Breast epithelium (tissue), 4 donors: ENCODE measurements at regions of chr5 and their contacts with region 1.

Region 1: DNA sequence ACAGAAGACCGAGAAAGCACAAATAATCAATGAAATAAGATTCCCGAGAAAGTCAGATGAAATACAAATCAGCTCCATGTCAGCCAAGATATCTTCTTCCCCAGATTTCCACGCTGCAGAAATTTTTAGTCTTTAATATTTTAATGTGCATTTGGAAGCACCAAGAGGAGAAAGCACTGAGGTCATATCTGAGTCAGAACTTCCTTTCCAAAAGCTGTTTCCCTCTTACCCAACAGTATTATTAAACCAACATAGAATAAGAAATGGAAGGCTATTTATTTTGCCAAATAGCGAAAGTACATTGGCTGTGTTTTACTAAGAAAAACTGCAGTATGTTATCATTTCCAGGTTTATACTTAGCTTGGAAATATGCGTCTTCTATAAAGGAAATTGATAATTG is 772.1 kb upstream of the CDH9 start:
- DNase-seq: no peak
- H3K4me3 ChIP-seq: no peak overlapping the region
- H3K27ac ChIP-seq: no peak overlapping the region
- H3K4me1 ChIP-seq: no peaks in the 10 kb centered on the region
- H3K27me3 ChIP-seq: no peaks in the 10 kb centered on the region
- CTCF ChIP-seq: no peak
- POLR2A ChIP-seq: no peak

Region 2: DNA sequence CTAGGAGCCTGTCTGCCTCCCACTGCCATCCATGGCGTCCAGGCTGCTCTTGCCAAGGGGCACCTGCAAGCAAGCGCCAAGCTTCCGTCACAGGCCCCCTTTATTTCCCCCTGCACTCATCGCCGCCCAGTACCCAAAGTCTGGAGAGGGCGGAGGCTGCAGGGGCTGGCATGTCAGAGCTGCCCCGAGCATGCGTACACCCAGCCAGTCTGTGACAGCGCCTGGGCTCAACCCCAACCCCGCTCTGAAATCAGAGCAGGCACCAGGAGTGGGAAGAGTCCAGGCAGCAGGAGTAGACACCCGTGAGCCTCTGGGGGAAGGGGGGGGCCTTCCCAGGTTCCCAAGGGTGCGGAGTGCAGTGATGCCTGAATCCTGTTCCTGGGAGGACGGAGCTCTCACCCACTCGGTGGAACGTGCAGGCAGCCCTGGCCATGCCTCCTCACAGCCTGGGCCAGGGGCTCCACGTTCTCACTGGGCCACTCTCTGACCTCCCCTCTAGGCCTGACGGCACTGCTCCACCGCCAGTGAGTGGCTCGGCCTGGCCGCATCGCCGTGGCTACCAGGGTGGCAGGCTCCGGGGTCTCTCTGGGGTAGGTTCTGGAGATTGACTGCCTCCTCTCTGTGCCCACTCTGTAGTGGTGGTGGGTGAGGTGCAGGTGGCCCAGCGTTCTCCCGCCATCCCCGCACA is 1241.1 kb before region 1 on chr5:
- intact Hi-C with region 1: loop called (anchors 10 kb)
- DNase-seq: no peak
- H3K4me3 ChIP-seq: no peak overlapping the region
- H3K27ac ChIP-seq: no peak overlapping the region
- H3K4me1 ChIP-seq: no peaks in the 10 kb centered on the region
- H3K27me3 ChIP-seq: no peaks in the 10 kb centered on the region
- CTCF ChIP-seq: no peak
- POLR2A ChIP-seq: no peak

Region 3: DNA sequence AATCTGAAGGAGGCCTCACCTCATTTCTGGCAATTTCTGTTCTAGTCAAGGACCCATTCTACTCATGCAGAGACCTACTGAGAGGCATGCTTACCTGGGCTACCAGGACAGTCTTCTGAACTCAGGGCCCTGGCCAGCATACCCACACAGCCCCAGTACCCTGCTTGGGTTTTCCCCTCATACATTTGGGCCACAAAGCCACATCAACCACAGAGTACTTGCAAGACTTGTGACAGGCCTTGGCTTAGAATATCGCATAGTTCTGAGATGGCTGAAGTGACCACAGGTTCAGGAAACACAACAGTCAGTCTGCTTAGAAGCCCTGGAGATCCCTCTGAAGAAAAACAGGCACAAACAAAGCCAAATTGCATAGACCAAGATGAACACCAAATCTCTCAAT is 13.2 kb before region 1 on chr5:
- intact Hi-C with region 1: no loop called
- DNase-seq: no peak
- H3K4me3 ChIP-seq: no peak overlapping the region
- H3K27ac ChIP-seq: no peak overlapping the region
- H3K4me1 ChIP-seq: no peaks in the 10 kb centered on the region
- H3K27me3 ChIP-seq: no peaks in the 10 kb centered on the region
- CTCF ChIP-seq: no peak
- POLR2A ChIP-seq: no peak